ENCODE measurements at regions of chr1 and their contacts with region 1.

Region 1: GRCh38 chr1:151968058-151968457 is 25.6 kb downstream of the S100A10 start:
- DNase-seq: peak; percentile 35
- ATAC-seq: peak; percentile 89
- H3K4me3 Mint-ChIP-seq: no peak overlapping the region
- H3K27ac Mint-ChIP-seq: no peak overlapping the region
- H3K4me1 Mint-ChIP-seq: peaks cover 38% of the 10 kb centered on the region
- H3K27me3 Mint-ChIP-seq: no peaks in the 10 kb centered on the region; the same call in 1 of the 2 replicates
- CTCF ChIP-seq: peak; percentile 57; the same call in 1 of the 2 replicates

Region 2: GRCh38 chr1:151710187-151710840 is 257.7 kb before region 1 on chr1:
- CTCF ChIA-PET with region 1: no interaction called
- POLR2A ChIA-PET with region 1: no interaction called
- DNase-seq: peak; percentile 81
- ATAC-seq: no peak
- H3K4me3 Mint-ChIP-seq: no peak overlapping the region
- H3K27ac Mint-ChIP-seq: no peak overlapping the region
- H3K4me1 Mint-ChIP-seq: peaks cover 2% of the 10 kb centered on the region
- H3K27me3 Mint-ChIP-seq: peaks cover 10% of the 10 kb centered on the region
- CTCF ChIP-seq: no peak

Region 3: DNA sequence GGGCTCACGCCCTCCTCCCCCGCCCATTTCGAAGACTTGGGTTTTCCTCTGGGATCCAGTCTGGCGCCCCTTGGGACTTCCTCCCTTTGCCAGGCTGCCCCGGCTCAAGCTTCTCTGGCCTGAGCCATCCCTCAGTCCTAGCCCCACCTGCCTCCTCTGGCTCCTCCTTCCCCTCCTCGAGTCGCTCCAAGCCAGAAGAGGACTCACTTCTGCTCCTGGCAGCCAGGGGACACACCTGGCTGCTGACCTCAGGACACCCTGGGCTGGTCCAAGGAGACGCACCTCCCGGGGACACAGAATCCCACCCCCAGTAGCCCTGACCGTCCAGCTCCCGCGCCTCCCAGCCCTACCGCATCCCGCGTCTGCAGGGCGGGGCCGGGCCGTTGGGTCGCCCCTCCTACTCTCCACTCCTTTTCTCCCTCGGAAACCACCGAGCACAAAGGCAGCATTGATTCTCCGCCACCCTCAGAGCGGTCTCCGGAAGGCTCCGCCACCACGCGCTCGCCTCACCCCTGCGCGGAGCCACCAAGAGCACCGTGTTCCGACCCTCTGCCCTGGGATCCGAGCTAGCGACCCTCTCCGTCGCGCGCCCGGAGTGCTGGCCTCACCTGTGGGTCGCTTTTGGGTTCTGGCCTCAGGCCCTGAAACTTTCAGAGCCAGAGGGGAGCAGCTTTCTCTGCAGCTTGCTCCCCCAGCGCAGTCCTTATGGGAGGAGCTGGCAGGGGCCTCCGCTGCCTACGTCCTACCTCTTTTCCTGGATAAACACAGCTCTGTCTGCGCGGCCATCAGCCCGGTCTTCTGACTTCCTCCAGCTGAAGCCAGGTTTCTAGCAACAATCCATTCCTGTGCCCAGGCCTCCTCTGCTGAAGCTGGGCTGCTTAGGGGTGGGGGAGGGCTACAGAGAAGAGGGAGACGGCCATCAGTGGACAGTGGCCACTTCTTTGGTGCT is 128.3 kb before region 1 on chr1 and contains the start of gene C2CD4D:
- CTCF ChIA-PET with region 1: no interaction called
- POLR2A ChIA-PET with region 1: no interaction called
- DNase-seq: peak; percentile 82
- ATAC-seq: peak; percentile 77
- H3K4me3 Mint-ChIP-seq: peak within 1 kb of the TSS; percentile 88
- H3K27ac Mint-ChIP-seq: peak within 1 kb of the TSS; percentile 96
- H3K4me1 Mint-ChIP-seq: peaks cover 26% of the 10 kb centered on the region
- H3K27me3 Mint-ChIP-seq: peaks cover 36% of the 10 kb centered on the region
- CTCF ChIP-seq: no peak
- total RNA-seq, gene C2CD4D: 0.85 to 2.0 TPM (median 0.94 TPM) in 3 replicates

Region 4: DNA sequence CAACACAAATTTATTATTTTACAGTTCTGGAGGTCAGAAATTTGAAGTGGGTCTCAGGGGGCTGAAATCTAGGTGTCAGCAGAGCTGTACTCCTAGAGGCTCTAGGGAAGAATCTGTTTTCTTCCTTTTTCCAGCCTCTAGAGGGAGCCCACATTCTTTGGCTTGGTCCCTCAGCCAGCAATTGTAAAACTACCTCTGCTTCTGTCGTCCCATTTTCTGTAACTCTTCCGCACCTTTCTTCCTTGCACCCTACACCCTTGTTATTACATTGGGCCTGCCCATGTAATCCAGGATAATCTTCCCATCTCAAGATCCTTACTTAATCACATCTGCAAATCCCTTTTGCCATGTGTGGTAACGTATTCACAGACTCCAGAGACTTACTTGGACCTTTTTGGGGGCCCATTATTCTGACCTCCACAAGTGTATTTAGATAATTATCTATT is 34.0 kb before region 1 on chr1:
- CTCF ChIA-PET with region 1: interaction called, 49 read pairs
- POLR2A ChIA-PET with region 1: interaction called, 3 read pairs
- DNase-seq: peak; percentile 29
- ATAC-seq: peak; percentile 90
- H3K4me3 Mint-ChIP-seq: no peak overlapping the region
- H3K27ac Mint-ChIP-seq: no peak overlapping the region; the same call in 1 of the 2 replicates
- H3K4me1 Mint-ChIP-seq: peaks cover 17% of the 10 kb centered on the region
- H3K27me3 Mint-ChIP-seq: peaks cover 2% of the 10 kb centered on the region; the same call in 1 of the 2 replicates
- CTCF ChIP-seq: peak; percentile 67

Region 5: DNA sequence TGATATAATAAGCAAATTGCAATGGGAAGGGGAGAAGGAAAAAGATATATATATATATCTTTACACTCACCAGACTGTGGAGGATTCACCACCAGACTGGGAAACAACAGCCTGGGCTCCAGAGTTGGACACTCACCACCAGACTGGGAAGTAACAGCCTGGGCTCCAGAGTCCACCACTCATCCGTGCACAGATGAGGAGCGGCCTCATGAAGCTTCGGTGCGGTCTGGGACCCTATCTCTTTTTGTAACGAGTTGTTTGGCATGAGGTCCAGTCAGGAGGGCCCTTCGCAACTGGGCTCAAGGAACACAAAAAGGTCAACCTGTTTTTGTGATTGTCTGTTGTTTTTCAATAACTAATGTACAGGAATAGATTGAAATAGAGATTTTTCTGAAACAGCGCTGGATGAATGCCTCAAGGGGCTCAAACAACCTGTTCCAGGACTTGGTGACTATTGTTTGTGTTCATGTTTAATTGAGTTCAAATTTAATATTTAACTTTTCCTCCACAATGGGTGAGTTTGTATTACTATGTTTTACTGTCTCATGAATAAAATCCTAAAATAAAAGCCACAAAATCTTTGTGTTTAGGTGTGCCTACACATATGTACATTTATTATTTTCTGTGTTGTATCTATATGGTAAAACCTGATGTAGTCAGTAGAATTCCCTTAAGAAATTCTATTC is 14.5 kb before region 1 on chr1:
- CTCF ChIA-PET with region 1: interaction called, 11 read pairs
- POLR2A ChIA-PET with region 1: no interaction called
- DNase-seq: no peak
- ATAC-seq: no peak
- H3K4me3 Mint-ChIP-seq: no peak overlapping the region
- H3K27ac Mint-ChIP-seq: no peak overlapping the region
- H3K4me1 Mint-ChIP-seq: no peaks in the 10 kb centered on the region
- H3K27me3 Mint-ChIP-seq: no peaks in the 10 kb centered on the region; the same call in 1 of the 2 replicates
- CTCF ChIP-seq: no peak

Region 6: GRCh38 chr1:151993654-151994496 is 25.8 kb after region 1 on chr1 and contains the start of gene S100A10:
- CTCF ChIA-PET with region 1: interaction called, 293 read pairs
- POLR2A ChIA-PET with region 1: interaction called, 4 read pairs
- DNase-seq: peak; percentile 63
- ATAC-seq: peak; percentile 56
- H3K4me3 Mint-ChIP-seq: peak within 1 kb of the TSS; percentile 93
- H3K27ac Mint-ChIP-seq: peak within 1 kb of the TSS; percentile 86
- H3K4me1 Mint-ChIP-seq: peaks cover 49% of the 10 kb centered on the region
- H3K27me3 Mint-ChIP-seq: peaks cover 8% of the 10 kb centered on the region; the same call in 1 of the 2 replicates
- CTCF ChIP-seq: no peak; the same call in 1 of the 2 replicates
- total RNA-seq, gene S100A10: 150 to 161 TPM (median 159 TPM) in 3 replicates

Region 7: GRCh38 chr1:152034646-152035405 is 66.8 kb after region 1 on chr1:
- CTCF ChIA-PET with region 1: interaction called, 39 read pairs
- POLR2A ChIA-PET with region 1: no interaction called
- DNase-seq: peak; percentile 76
- ATAC-seq: peak; percentile 71
- H3K4me3 Mint-ChIP-seq: peak overlapping the region; percentile 89
- H3K27ac Mint-ChIP-seq: peak overlapping the region; percentile 85
- H3K4me1 Mint-ChIP-seq: peaks cover 40% of the 10 kb centered on the region
- H3K27me3 Mint-ChIP-seq: peaks cover 9% of the 10 kb centered on the region
- CTCF ChIP-seq: peak; percentile 88

Region 8: GRCh38 chr1:152125834-152126443 is 157.9 kb after region 1 on chr1:
- CTCF ChIA-PET with region 1: no interaction called
- POLR2A ChIA-PET with region 1: no interaction called
- DNase-seq: no peak
- ATAC-seq: no peak
- H3K4me3 Mint-ChIP-seq: no peak overlapping the region
- H3K27ac Mint-ChIP-seq: no peak overlapping the region
- H3K4me1 Mint-ChIP-seq: peaks cover 8% of the 10 kb centered on the region; the same call in 1 of the 2 replicates
- H3K27me3 Mint-ChIP-seq: peaks cover 29% of the 10 kb centered on the region
- CTCF ChIP-seq: no peak

Measured in WTC11 (cell line).